ENCODE measurements at regions of chr5 and their contacts with region 1.

Region 1: GRCh38 chr5:139273572-139274289 is 19.8 kb upstream of the MATR3 start:
- DNase-seq: peak; percentile 82 to 91 (median 86)
- H3K4me3 ChIP-seq: peak overlapping the region; percentile 14 to 65
- H3K4me3 Mint-ChIP-seq: peak overlapping the region; percentile 85 to 91 (median 87)
- H3K27ac ChIP-seq: peak overlapping the region; percentile 58
- H3K27ac Mint-ChIP-seq: peak overlapping the region; percentile 74 to 94 (median 90)
- H3K4me1 ChIP-seq: peaks cover 55% of the 10 kb centered on the region
- H3K4me1 Mint-ChIP-seq: peaks cover 29 to 55% (median 38%) of the 10 kb centered on the region in 4 donors
- H3K27me3 ChIP-seq: no peaks in the 10 kb centered on the region
- H3K27me3 Mint-ChIP-seq: no peaks in the 10 kb centered on the region

Region 2: DNA sequence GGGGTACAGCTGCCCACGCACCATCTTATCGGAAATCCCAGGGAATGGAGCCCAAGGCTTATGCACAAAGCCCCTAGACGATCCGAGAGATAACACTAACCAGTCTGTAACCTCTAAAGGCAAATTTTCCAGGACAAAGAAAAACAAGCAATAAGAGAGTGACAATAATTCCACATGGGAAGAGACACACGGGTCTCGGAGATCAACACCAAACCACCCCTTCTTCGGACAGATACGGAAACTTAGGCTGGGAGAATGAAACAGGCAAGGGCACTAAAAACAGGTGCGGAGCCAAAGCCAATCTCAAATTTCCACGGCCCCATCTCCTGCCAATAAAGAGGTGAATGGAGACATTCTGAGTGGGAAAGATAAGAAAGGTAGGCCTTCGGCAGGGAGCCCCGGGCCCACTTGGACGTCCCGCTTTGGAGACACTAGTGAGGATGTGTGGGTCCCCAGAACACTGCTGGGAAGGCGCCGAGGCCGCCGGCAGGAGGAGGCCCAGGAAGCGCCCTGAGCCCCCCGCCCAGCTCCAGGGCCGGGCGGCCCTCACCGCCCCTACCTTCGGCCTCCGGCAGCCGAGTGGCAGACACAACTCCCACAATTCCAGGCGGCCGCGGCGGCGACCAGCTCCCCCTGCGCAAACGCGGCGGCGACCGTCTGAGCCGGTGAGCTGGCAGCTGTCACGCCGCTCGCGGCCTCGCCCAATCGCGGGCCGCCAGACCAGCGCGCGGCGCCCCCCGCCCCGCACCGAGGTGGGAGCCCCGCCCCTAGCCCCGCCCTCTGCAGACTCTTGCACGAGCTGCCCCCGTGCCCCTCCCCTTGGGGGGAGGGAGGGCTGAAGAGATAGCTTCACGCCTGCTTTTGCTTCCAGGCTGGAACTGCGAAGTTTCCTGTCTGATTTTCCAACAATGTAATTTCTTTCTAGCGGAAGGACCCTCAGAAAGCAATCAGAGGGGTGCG is 75.7 kb before region 1 on chr5 and contains the start of gene SIL1:
- CTCF ChIA-PET with region 1: interaction called, 3 read pairs
- POLR2A ChIA-PET with region 1: interaction called, 10 read pairs
- intact Hi-C with region 1: loop called (anchors 5 kb)
- DNase-seq: peak; percentile 90 to 93 (median 91)
- H3K4me3 ChIP-seq: peak within 1 kb of the TSS; percentile 59 to 69
- H3K4me3 Mint-ChIP-seq: peak within 1 kb of the TSS; percentile 87 to 95 (median 89)
- H3K27ac ChIP-seq: peak within 1 kb of the TSS; percentile 86
- H3K27ac Mint-ChIP-seq: peak within 1 kb of the TSS; percentile 84 to 98 (median 94)
- H3K4me1 ChIP-seq: peaks cover 13% of the 10 kb centered on the region
- H3K4me1 Mint-ChIP-seq: peaks cover 13 to 29% (median 19%) of the 10 kb centered on the region in 4 donors
- H3K27me3 ChIP-seq: no peaks in the 10 kb centered on the region
- H3K27me3 Mint-ChIP-seq: no peaks in the 10 kb centered on the region
- total RNA-seq, gene SIL1: 16.4 to 16.7 TPM

Region 3: DNA sequence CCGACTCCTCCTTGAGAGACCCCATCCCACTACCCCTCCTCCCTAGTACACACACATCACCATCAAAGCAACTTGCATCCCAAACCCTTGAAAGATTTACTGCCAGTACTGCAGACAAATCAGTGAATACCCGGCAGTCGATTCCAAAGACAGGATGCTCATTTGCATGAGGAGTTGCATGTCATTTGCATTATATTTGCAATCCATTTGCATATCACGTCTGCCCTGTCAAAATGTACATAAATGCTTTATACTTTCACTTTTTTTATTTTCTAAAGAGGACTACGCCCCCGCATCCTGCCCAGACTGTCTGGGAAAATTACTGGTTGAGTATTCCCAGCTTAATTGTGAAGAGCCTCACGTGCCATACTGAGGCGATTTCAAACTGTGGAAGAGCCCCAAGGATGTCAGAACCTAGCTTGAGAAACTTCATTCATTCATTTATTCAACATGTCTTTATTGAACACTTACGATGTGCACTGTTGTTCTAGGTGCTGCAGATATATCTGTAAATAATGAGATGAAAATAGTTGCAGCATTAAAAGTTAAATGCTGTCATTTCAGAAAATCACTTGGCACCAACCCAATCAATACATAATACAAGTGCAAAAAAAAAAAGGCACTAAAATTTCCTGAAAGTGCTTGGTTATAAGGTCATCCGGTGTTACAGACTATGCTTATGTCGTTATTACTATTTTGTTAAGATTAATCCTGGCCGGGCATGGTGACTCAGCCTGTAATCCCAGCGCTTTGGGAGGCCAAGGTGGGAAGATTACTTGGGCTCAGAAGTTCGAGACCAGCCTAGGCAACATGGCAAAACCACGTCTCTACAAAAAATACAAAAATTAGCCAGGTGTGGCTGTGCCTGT is 58.4 kb before region 1 on chr5:
- CTCF ChIA-PET with region 1: no interaction called
- POLR2A ChIA-PET with region 1: no interaction called
- intact Hi-C with region 1: no loop called
- DNase-seq: no peak
- H3K4me3 ChIP-seq: no peak overlapping the region
- H3K4me3 Mint-ChIP-seq: no peak overlapping the region
- H3K27ac ChIP-seq: no peak overlapping the region
- H3K27ac Mint-ChIP-seq: peak overlapping the region in 1 of 7 donors; percentile 17
- H3K4me1 ChIP-seq: no peaks in the 10 kb centered on the region
- H3K4me1 Mint-ChIP-seq: peaks cover 0 to 4% (median 0%) of the 10 kb centered on the region in 4 donors
- H3K27me3 ChIP-seq: no peaks in the 10 kb centered on the region
- H3K27me3 Mint-ChIP-seq: peaks cover 0 to 1% of the 10 kb centered on the region in 2 donors

Region 4: GRCh38 chr5:139392678-139393496 is 119.2 kb after region 1 on chr5:
- CTCF ChIA-PET with region 1: no interaction called
- POLR2A ChIA-PET with region 1: no interaction called
- intact Hi-C with region 1: loop called (anchors 5 kb)
- DNase-seq: peak; percentile 69 to 81 (median 73)
- H3K4me3 ChIP-seq: peak overlapping the region; percentile 61 to 69
- H3K4me3 Mint-ChIP-seq: peak overlapping the region; percentile 88 to 94 (median 88)
- H3K27ac ChIP-seq: peak overlapping the region; percentile 39
- H3K27ac Mint-ChIP-seq: peak overlapping the region; percentile 57 to 93 (median 85)
- H3K4me1 ChIP-seq: peaks cover 42% of the 10 kb centered on the region
- H3K4me1 Mint-ChIP-seq: peaks cover 22 to 43% (median 30%) of the 10 kb centered on the region in 4 donors
- H3K27me3 ChIP-seq: no peaks in the 10 kb centered on the region
- H3K27me3 Mint-ChIP-seq: no peaks in the 10 kb centered on the region

Measured in CD4-positive, alpha-beta memory T cell (primary cell).